A549 (cell line): ENCODE measurements at regions of chr5 and their contacts with region 1.

Region 1: DNA sequence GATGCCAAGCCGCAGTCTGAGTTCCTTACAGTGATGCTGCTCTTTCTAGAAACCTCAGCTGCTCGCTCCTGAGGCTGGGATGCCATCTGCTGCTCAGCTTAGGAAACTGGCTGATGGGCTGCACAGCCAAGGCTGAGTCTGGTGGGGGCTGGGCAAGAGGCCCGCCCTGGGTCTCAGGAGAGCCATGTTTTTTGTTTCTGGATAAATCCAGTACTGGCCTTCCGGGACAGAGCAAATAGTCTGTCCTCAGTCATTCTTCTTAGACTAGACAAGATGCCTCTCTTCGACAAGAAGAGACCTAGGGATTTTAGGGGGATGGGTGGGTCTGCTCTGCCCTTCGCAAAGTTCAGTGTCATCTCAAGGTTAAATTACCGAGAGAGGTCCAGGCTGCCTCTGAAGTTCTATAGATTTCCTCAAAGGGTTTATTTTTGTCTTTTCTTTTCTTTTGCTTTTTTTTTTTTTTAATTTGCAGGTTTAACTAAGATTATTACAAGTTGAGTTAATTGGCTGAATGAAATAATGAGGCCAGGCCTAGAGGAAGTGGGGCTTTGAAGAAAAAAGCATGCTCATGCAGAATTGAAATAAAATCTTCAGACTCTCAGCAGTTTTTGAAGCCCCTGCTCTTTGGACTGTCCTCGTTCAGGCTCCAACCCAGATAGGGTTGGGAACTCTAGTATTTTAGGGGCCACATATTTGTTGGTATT is 30.6 kb upstream of the MATR3 start:
- DNase-seq: peak; percentile 89 to 97
- ATAC-seq: peak; percentile 99 to 100
- H3K4me3 ChIP-seq: no peak overlapping the region
- H3K27ac ChIP-seq: peak overlapping the region in 1 of 2 experiments; percentile 48; a peak in 2 of 6 replicates
- H3K4me1 ChIP-seq: 0 out of 3 replicates have a peak, but pooled peaks cover 4% of the 10 kb centered on the region
- CTCF ChIP-seq: peak; percentile 94
- EP300 ChIP-seq: no peak
- POLR2A ChIP-seq: no peak
- RAD21 ChIP-seq: peak; percentile 98 to 99

Region 2: GRCh38 chr5:138641547-138642298 is 621.2 kb before region 1 on chr5:
- CTCF ChIA-PET with region 1: interaction called, 21 read pairs
- POLR2A ChIA-PET with region 1: no interaction called
- DNase-seq: peak; percentile 62 to 65
- ATAC-seq: peak; percentile 74 to 91; a peak in 5 of 6 replicates
- H3K4me3 ChIP-seq: no peak overlapping the region
- H3K27ac ChIP-seq: no peak overlapping the region
- H3K4me1 ChIP-seq: no peaks in the 10 kb centered on the region
- CTCF ChIP-seq: peak; percentile 84
- EP300 ChIP-seq: no peak
- POLR2A ChIP-seq: no peak
- RAD21 ChIP-seq: peak; percentile 82 to 91

Region 3: DNA sequence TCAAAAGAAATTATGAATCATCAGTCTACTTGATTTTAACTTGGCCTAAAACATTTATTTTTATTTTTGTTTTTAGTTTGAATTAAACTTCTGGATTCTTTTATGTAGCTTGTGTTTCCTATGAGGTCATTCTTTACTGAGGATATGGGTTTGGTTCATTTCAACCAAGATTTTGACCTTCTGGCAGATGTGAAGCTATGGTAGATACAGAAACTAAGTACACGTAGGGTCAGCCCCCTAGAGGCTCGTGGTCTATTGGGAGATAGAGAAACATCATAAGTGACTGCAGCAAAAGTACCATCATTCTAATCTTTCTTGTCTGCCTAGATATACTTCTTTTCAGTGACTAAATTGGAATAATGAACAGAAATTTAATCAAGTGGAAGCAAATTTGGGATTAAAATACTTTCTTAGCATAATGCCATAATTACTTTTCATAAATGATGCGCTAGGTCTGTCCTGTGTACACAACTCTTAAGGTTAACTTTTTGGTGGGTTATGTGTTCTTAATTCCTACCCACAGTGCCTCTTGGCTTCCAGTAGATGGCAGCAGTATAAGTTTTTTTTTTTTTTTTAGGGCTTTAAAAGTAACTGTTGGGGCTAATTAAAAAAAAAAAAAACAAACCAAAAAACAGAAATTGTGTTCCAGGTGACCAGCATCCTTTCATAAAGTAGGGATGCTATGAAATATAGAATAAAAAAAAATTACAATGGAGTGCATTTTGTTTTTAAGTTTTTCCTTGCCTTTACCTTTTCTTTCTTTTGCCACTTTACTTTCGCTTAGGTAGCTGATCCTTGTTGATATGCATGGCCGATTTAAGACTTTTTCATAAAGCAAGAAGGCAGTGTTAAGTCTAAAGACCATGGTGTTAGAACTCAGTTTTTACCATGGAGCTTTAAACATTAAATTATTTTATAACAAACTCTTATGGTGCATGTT is 437.7 kb before region 1 on chr5:
- CTCF ChIA-PET with region 1: interaction called, 25 read pairs
- POLR2A ChIA-PET with region 1: no interaction called
- DNase-seq: peak; percentile 11 to 33
- ATAC-seq: peak; percentile 83 to 85
- H3K4me3 ChIP-seq: no peak overlapping the region
- H3K27ac ChIP-seq: no peak overlapping the region
- H3K4me1 ChIP-seq: no peaks in the 10 kb centered on the region
- CTCF ChIP-seq: peak; percentile 70
- EP300 ChIP-seq: no peak
- POLR2A ChIP-seq: no peak
- RAD21 ChIP-seq: peak; percentile 54 to 57

Region 4: GRCh38 chr5:139215107-139215975 is 47.6 kb before region 1 on chr5:
- CTCF ChIA-PET with region 1: no interaction called
- POLR2A ChIA-PET with region 1: no interaction called
- DNase-seq: no peak
- ATAC-seq: no peak
- H3K4me3 ChIP-seq: no peak overlapping the region
- H3K27ac ChIP-seq: no peak overlapping the region
- H3K4me1 ChIP-seq: no peaks in the 10 kb centered on the region
- CTCF ChIP-seq: no peak
- EP300 ChIP-seq: no peak
- POLR2A ChIP-seq: no peak
- RAD21 ChIP-seq: no peak

Region 5: GRCh38 chr5:139246394-139246793 is 16.5 kb before region 1 on chr5:
- CTCF ChIA-PET with region 1: interaction called, 22 read pairs
- POLR2A ChIA-PET with region 1: no interaction called
- DNase-seq: no peak
- ATAC-seq: peak; percentile 70 to 72; a peak in 5 of 6 replicates
- H3K4me3 ChIP-seq: no peak overlapping the region
- H3K27ac ChIP-seq: peak overlapping the region; percentile 10 to 31; a peak in 1 of 6 replicates
- H3K4me1 ChIP-seq: peaks cover 8% of the 10 kb centered on the region; the same call in 1 of the 3 replicates
- CTCF ChIP-seq: no peak
- EP300 ChIP-seq: no peak
- POLR2A ChIP-seq: no peak
- RAD21 ChIP-seq: no peak

Region 6: DNA sequence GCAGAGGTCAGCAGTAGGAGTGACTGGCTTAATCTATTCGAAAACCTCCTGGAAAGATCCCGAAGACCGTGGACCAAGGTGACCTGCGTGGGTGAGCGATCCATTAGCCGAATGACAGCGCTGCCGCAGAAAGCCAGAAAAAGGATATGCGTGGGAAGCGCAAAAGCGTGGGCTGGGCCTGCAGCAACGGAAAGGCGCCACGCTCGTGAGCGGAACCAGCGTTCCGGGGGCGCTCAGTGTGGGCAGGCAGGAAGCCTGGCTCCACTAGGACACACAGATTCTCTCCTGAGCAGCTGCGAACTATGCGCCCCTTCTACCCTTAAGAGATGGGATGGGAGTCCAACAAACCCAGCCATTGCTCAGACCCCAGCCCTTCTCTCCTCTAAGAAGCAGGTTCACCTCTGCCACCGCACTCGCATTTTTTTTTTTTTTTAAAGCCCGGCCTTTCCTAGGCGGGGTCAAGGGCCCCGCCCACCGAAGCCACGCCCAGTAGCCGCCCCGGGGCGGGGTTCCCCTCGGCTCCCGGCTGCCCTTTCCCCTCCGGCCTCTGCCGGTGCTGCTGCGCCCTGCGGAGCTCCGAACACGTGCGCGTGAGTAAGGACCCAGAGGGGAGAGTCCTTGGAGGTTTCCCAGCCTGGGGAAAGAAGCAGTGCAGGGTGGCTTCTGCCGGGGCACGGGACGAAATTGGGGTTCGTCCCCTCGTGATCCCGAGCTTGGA is 10.8 kb after region 1 on chr5:
- CTCF ChIA-PET with region 1: interaction called, 25 read pairs
- POLR2A ChIA-PET with region 1: no interaction called
- DNase-seq: peak; percentile 89 to 93
- ATAC-seq: peak; percentile 92 to 94
- H3K4me3 ChIP-seq: peak overlapping the region; percentile 80
- H3K27ac ChIP-seq: peak overlapping the region; percentile 94 to 97
- H3K4me1 ChIP-seq: peaks cover 62% of the 10 kb centered on the region
- CTCF ChIP-seq: no peak
- EP300 ChIP-seq: no peak
- POLR2A ChIP-seq: peak; percentile 92
- RAD21 ChIP-seq: no peak